HCT116 (cell line): ENCODE measurements at regions of chr5 and their contacts with region 1.

Region 1: GRCh38 chr5:132064738-132065331 is 4.4 kb downstream of the IL3 start:
- DNase-seq: peak; percentile 71
- ATAC-seq: peak; percentile 86
- H3K4me3 ChIP-seq: no peak overlapping the region
- H3K27ac ChIP-seq: peak overlapping the region; percentile 8; the same call in 1 of the 2 replicates
- H3K4me1 ChIP-seq: peaks cover 0 to 4% of the 10 kb centered on the region in 2 experiments; a peak in 1 of 4 replicates
- H3K27me3 ChIP-seq: no peaks in the 10 kb centered on the region
- CTCF ChIP-seq: peak; percentile 75 to 98 (median 93)
- POLR2A ChIP-seq: no peak
- RAD21 ChIP-seq: peak; percentile 78

Region 2: GRCh38 chr5:131423056-131423455 is 641.8 kb before region 1 on chr5:
- CTCF ChIA-PET with region 1: interaction called, 13 read pairs
- POLR2A ChIA-PET with region 1: no interaction called
- RAD21 ChIA-PET with region 1: interaction called in 1 of 2 experiments, 4 read pairs
- intact Hi-C with region 1: loop called (anchors 1 kb)
- DNase-seq: no peak
- ATAC-seq: peak; percentile 77
- H3K4me3 ChIP-seq: no peak overlapping the region
- H3K27ac ChIP-seq: no peak overlapping the region
- H3K4me1 ChIP-seq: no peaks in the 10 kb centered on the region
- H3K27me3 ChIP-seq: no peaks in the 10 kb centered on the region
- CTCF ChIP-seq: peak; percentile 24 to 61 (median 60); a peak in 5 of 6 replicates
- POLR2A ChIP-seq: no peak
- RAD21 ChIP-seq: peak; percentile 66

Region 3: DNA sequence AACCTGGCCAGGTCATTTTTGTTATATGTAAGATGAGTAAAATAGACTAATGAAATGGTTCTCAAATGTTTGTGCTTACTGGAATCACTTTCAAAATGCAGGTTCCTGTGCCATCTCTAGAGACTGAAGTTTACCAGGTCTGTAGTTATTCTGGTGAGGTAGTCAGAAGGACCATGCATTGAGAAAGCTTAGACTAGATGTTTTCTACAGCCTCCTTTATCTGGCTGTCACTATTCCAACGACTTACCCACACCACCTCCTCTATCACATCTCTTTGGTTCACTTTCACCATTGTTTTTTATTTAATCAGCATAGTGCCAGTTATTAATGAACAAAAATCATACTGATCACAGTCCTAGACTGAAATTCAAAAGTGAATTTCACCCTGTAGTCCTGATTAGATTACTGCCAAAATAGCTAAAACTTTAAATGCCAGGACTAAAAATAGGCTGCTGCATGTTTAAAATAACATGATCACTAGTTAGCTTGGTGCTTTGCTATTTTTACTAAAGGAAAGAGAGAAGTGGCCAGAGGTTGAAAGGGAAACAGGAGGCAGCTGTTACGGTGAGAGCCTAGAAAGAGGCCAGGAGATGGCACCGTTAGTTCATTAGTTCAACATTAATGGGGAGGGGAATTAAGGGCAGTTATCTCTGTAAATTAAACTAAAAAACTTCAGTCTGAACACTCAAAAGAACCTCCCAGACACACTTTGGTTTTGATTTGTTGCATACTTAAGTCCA is 254.2 kb before region 1 on chr5:
- CTCF ChIA-PET with region 1: interaction called, 35 read pairs
- POLR2A ChIA-PET with region 1: interaction called, 3 read pairs
- RAD21 ChIA-PET with region 1: interaction called in 1 of 2 experiments, 4 read pairs
- intact Hi-C with region 1: loop called (anchors 1 kb)
- DNase-seq: peak; percentile 29
- ATAC-seq: peak; percentile 76
- H3K4me3 ChIP-seq: no peak overlapping the region
- H3K27ac ChIP-seq: no peak overlapping the region
- H3K4me1 ChIP-seq: peaks cover 0 to 9% of the 10 kb centered on the region in 2 experiments; a peak in 2 of 4 replicates
- H3K27me3 ChIP-seq: no peaks in the 10 kb centered on the region
- CTCF ChIP-seq: peak; percentile 27 to 77 (median 53); a peak in 4 of 6 replicates
- POLR2A ChIP-seq: no peak
- RAD21 ChIP-seq: peak; percentile 85

Region 4: DNA sequence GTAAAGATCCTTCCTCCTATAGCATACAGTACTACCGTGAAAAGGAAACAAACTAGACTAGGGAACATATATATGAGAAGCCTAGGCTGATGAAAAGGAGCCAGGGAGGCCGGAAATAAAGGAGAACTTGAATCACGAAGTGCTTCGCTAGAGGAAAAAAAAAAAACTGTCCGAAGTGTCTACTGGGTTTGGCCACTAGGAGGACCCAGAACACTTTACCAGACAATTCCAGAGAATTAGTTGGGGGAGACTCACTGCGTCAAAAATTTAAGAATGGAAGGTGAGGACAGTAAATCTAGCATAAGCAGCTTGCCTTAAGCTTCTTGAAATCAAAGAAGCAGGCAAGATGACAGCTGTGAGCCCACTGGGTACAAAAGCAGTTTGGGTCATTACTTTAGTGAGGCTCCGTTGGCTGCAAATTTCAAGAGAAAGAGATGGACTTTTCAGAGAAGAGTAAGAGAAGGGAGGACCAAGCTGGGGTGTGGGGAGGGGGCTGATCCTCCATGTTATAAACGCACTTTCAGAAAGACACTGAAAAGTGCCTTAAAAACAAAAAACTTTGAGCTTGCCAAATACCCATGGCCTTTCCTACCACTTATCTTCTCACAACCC is 115.4 kb after region 1 on chr5:
- CTCF ChIA-PET with region 1: interaction called, 6 read pairs
- POLR2A ChIA-PET with region 1: no interaction called
- RAD21 ChIA-PET with region 1: no interaction called
- intact Hi-C with region 1: loop called (anchors 2 kb)
- DNase-seq: peak; percentile 47
- ATAC-seq: peak; percentile 73
- H3K4me3 ChIP-seq: no peak overlapping the region
- H3K27ac ChIP-seq: no peak overlapping the region
- H3K4me1 ChIP-seq: peaks cover 3 to 19% of the 10 kb centered on the region in 2 experiments; a peak in 3 of 4 replicates
- H3K27me3 ChIP-seq: no peaks in the 10 kb centered on the region
- CTCF ChIP-seq: peak; percentile 72 to 85 (median 75); a peak in 5 of 6 replicates
- POLR2A ChIP-seq: no peak
- RAD21 ChIP-seq: peak; percentile 83

Region 5: GRCh38 chr5:132238169-132238744 is 173.4 kb after region 1 on chr5:
- CTCF ChIA-PET with region 1: interaction called, 6 read pairs
- POLR2A ChIA-PET with region 1: no interaction called
- RAD21 ChIA-PET with region 1: no interaction called
- intact Hi-C with region 1: loop called (anchors 2 kb)
- DNase-seq: no peak
- ATAC-seq: peak; percentile 96
- H3K4me3 ChIP-seq: no peak overlapping the region
- H3K27ac ChIP-seq: no peak overlapping the region
- H3K4me1 ChIP-seq: no peaks in the 10 kb centered on the region
- H3K27me3 ChIP-seq: no peaks in the 10 kb centered on the region
- CTCF ChIP-seq: peak; percentile 65 to 87 (median 81)
- POLR2A ChIP-seq: no peak
- RAD21 ChIP-seq: peak; percentile 85

Region 6: GRCh38 chr5:132369474-132370180 is 304.8 kb after region 1 on chr5 and contains the start of gene SLC22A5:
- CTCF ChIA-PET with region 1: interaction called, 4 read pairs
- POLR2A ChIA-PET with region 1: no interaction called
- RAD21 ChIA-PET with region 1: no interaction called
- intact Hi-C with region 1: loop called (anchors 1 kb)
- DNase-seq: peak; percentile 42
- ATAC-seq: peak; percentile 94
- H3K4me3 ChIP-seq: peak within 1 kb of the TSS; percentile 71 to 75
- H3K27ac ChIP-seq: peak within 1 kb of the TSS; percentile 83
- H3K4me1 ChIP-seq: peaks cover 16 to 47% of the 10 kb centered on the region in 2 experiments
- H3K27me3 ChIP-seq: no peaks in the 10 kb centered on the region
- CTCF ChIP-seq: no peak
- POLR2A ChIP-seq: peak; percentile 71
- RAD21 ChIP-seq: no peak
- total RNA-seq, gene SLC22A5: 9.9 TPM